Ascending aorta (tissue), 2 donors: ENCODE measurements at regions of chr2 and their contacts with region 1.

Region 1: DNA sequence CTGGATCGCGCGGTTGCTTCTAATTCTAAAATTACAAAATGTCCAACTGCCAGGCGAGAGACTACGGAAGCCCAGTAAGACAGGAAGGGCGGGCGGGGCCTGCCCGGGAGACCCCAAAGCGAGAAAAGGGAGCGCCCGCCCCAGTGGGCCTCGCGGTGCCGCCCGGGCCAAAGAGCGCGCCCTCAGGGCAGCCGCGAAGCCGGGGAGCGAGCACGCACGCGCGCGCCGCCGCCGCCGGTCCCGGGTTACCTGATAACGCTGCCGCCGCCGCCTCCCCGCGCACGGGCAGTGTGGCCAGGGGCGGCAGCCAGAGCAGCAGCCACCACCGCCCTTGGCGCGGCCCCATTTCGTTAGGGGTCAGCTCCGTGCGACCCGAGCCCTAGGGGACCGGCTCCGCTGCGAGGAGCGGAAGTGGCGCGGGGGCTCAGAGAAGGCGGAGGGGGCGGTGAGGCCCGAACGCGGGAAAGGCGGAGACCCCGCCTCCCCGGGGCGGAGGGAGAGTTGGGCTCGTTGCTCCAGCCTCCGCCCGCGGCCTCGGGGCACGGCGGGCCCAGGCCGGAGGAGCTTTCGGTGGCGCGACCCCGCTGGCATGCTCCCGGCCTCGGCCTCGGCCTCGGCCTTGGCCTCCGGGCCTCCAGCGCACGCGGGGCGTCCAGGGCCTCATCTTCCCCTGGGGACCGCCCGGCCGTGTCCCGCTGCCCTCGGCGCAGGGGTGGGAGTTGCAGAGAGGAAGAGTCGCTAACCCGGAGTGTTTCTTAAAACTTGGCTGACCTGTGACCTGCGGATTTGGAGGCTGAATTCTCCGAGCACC is at the start of gene NEMP2:
- DNase-seq: peak in 1 of 2 donors; percentile 83
- H3K4me3 ChIP-seq: peak within 1 kb of the TSS; percentile 70 to 79
- H3K27ac ChIP-seq: peak within 1 kb of the TSS; percentile 96 to 97
- H3K4me1 ChIP-seq: peaks cover 0 to 9% of the 10 kb centered on the region in 2 donors
- H3K27me3 ChIP-seq: no peaks in the 10 kb centered on the region
- CTCF ChIP-seq: no peak
- total RNA-seq, gene NEMP2: 0.43 TPM

Region 2: GRCh38 chr2:189783927-189784867 is 750.3 kb before region 1 on chr2 and contains the starts of genes ORMDL1 and PMS1:
- intact Hi-C with region 1: loop called (anchors 5 kb)
- DNase-seq: peak; percentile 73 to 97
- H3K4me3 ChIP-seq: peak within 1 kb of the TSS; percentile 81 to 91
- H3K27ac ChIP-seq: peak within 1 kb of the TSS; percentile 95 to 96
- H3K4me1 ChIP-seq: peaks cover 15 to 24% of the 10 kb centered on the region in 2 donors
- H3K27me3 ChIP-seq: no peaks in the 10 kb centered on the region
- CTCF ChIP-seq: no peak
- total RNA-seq, gene ORMDL1: 68.6 TPM
- total RNA-seq, gene PMS1: 8.7 TPM

Region 3: GRCh38 chr2:190365499-190366204 is 168.9 kb before region 1 on chr2:
- intact Hi-C with region 1: no loop called
- DNase-seq: no peak
- H3K4me3 ChIP-seq: no peak overlapping the region
- H3K27ac ChIP-seq: no peak overlapping the region
- H3K4me1 ChIP-seq: no peaks in the 10 kb centered on the region
- H3K27me3 ChIP-seq: no peaks in the 10 kb centered on the region
- CTCF ChIP-seq: no peak

Region 4: DNA sequence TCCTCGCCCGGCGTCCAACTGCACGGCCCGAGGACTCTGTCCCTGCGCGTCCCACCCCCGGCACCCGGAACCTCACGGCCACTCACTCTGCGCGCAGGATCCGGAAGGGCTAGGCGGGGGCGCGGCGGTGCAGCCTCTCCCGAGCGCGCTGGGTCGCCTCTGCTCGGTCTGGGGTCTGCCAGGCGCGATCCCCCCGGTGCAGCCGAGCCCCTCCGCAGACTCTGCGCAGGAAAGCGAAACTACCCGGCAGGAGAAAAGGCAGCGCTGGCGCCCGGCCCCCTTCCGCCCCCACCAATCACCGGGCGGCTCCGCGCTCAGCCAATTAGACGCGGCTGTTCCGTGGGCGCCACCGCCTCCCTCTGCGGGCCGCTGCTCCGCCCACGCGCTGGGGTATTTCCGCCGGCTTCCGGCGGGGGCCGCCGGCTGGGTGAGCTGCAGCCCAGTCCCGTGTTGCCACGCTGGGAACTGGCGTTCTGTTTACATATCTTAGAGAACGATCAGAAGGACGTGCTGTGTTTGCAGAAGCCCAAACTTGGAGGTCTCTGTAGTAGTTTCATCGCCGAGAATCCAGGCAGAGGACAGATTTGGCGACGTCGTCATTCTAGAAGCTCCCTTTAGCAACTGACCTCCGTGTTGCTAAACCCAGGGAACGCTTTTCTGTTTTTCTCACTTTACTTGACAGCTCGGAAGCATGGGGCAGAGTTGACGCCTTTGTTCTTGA is 479.6 kb after region 1 on chr2 and contains the start of gene STAT1:
- intact Hi-C with region 1: loop called (anchors 10 kb)
- DNase-seq: peak; percentile 74 to 96
- H3K4me3 ChIP-seq: peak within 1 kb of the TSS; percentile 84 to 93
- H3K27ac ChIP-seq: peak within 1 kb of the TSS; percentile 91 to 93
- H3K4me1 ChIP-seq: peaks cover 3 to 14% of the 10 kb centered on the region in 2 donors
- H3K27me3 ChIP-seq: no peaks in the 10 kb centered on the region
- CTCF ChIP-seq: peak in 2 of 3 experiments; percentile 31 to 32
- total RNA-seq, gene STAT1: 13.0 TPM

Region 5: DNA sequence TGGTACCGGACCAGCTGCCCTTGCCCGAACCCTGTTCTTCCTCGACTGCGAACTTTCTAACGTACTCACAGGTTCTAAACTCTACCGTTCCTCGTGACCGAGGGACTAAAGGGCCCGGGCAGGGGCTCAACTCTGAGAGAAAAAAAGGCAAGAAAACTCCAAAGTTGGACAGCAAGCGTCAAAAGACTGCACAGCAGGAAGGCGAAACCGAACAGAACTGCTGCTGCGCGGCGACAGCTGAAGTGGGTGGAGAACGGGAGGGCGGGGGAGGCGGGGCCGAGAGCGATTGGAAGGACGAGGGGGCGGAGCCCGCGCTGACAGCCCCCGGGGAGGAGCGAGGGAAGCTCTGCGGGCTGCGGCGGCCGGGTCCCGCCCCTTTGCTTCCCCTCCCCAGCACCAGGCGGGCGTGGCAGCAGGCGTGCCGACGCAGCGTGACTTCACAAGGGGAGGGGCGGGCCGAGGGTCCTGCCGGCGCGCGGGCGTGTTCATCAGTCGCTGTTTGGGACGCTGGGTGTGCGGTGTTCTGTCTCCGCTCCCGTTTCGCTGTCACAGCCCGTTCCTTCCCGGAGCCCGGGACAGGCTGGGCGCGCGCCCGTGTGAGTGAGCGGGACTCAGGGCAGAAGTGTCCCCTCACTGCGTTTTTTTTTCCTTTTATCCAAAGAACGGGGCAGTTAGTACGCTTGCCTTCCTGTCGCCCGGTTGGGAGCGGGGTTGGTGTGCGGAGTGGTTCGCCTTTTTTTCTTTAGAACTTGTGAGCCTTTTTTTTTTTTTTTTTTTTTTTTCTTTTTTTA is 1143.3 kb after region 1 on chr2 and contains the start of gene NABP1:
- intact Hi-C with region 1: loop called (anchors 10 kb)
- DNase-seq: peak; percentile 95 to 99
- H3K4me3 ChIP-seq: peak within 1 kb of the TSS; percentile 55 to 82
- H3K27ac ChIP-seq: peak within 1 kb of the TSS; percentile 90 to 96
- H3K4me1 ChIP-seq: peaks cover 4 to 10% of the 10 kb centered on the region in 2 donors
- H3K27me3 ChIP-seq: no peaks in the 10 kb centered on the region
- CTCF ChIP-seq: no peak
- total RNA-seq, gene NABP1: 38.5 TPM